ENCODE measurements at regions of chr17 and their contacts with region 1.

Region 1: DNA sequence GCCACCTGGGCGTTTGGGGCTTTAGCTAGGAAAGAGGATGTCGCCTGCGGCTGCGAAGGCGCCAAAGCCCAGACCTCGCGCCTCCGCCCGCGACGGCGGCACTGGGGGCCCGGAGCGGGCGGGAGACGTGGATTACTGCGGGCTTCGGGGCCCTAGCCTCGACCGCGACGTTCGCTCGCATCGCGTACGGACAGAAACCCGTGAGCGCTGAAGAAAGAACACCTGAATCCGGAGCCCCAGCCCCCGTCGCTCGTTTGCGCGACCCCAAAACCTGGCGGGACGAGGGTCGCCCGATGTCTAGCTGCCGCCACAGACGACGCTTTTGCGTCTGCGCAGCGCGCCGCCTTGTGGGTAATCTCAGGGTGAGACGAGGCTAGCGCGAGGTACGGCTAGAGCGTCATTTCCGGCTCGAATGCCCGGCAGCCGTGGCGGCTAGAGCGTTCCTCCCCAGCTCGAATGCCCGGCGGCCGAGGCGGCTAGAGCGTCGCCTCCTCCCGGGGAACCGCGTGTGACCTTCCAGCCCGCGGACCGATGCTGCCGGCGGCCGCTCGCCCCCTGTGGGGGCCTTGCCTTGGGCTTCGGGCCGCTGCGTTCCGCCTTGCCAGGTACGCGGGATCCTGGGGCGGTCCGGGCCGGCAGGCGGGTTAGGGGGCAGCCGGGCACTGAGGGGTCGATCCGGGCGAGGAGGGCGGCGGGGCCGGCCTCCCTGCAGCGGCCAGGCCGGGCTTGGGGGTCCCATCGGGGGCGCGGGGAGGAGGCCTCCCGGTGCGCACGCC is at the start of gene MRPL12:
- H3K4me3 Mint-ChIP-seq: peak within 1 kb of the TSS; percentile 98
- H3K27ac Mint-ChIP-seq: peak within 1 kb of the TSS; percentile 94
- H3K4me1 Mint-ChIP-seq: peaks cover 37% of the 10 kb centered on the region
- H3K27me3 Mint-ChIP-seq: no peaks in the 10 kb centered on the region

Region 2: GRCh38 chr17:81621494-81622130 is 81.5 kb before region 1 on chr17:
- intact Hi-C with region 1: no loop called
- H3K4me3 Mint-ChIP-seq: no peak overlapping the region
- H3K27ac Mint-ChIP-seq: no peak overlapping the region
- H3K4me1 Mint-ChIP-seq: peaks cover 27% of the 10 kb centered on the region
- H3K27me3 Mint-ChIP-seq: no peaks in the 10 kb centered on the region

Region 3: DNA sequence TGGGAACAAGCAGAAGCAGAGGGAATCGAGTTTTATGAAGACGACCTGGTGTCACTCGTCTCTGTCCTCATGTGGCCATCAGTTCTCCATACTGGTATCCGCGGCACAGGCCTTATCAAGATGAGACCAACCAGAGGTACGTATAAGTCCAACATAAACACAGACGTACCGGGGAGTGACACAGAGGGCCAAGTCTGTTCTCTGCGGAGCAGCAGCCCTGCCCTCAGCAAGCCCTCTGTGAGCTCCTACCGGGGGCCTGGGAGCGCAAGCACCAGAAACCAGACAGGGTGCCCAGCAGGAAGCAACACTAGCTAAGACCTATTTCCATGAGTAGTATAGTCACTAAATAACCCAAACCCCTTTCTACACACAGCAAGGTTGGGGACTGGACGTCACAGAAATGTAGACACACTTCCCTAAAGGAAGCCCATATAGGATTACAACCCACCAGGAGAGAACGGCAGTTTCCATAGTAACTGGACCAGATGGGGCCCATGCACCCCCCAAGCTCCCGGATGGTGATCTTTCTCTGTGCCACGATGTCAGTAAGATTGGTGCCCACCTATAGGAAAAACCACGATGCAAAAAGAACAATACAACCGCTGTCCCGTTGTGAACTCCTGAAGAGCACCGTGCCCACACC is 20.5 kb before region 1 on chr17:
- intact Hi-C with region 1: loop called (anchors 1 kb)
- H3K4me3 Mint-ChIP-seq: peak overlapping the region; percentile 85
- H3K27ac Mint-ChIP-seq: peak overlapping the region; percentile 81
- H3K4me1 Mint-ChIP-seq: peaks cover 42% of the 10 kb centered on the region
- H3K27me3 Mint-ChIP-seq: no peaks in the 10 kb centered on the region